ENCODE measurements at regions of chr9 and their contacts with region 1.

Region 1: DNA sequence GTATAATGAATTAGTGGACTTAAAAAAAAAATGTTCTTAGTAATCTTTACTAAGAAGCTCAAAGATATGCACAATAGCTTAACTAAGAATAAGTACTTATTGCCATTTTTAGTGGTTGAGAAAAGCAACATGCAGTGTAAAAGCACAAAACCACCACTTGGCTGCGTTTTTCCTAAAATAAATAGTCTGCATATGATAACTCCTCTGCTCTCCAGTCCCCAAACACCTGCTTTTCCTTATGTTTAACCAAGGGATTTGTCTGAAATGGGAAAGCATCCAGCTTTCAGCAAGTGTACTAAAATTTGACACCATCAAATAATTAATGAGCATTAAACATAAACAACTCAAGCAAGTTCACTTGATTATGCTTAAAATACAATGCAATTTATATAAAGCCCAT is 41.4 kb downstream of the PSIP1 start:
- DNase-seq: peak in 2 of 3 donors; percentile 11 to 13
- H3K4me3 ChIP-seq: no peak overlapping the region
- H3K27ac ChIP-seq: no peak overlapping the region
- H3K4me1 ChIP-seq: no peaks in the 10 kb centered on the region
- H3K27me3 ChIP-seq: no peaks in the 10 kb centered on the region

Region 2: GRCh38 chr9:15416880-15417279 is 52.5 kb before region 1 on chr9:
- CTCF ChIA-PET with region 1: no interaction called
- POLR2A ChIA-PET with region 1: no interaction called
- DNase-seq: peak; percentile 59 to 82 (median 76)
- H3K4me3 ChIP-seq: no peak overlapping the region
- H3K27ac ChIP-seq: no peak overlapping the region
- H3K4me1 ChIP-seq: peaks cover 0 to 3% (median under 1%) of the 10 kb centered on the region in 4 experiments
- H3K27me3 ChIP-seq: no peaks in the 10 kb centered on the region

Region 3: GRCh38 chr9:15484802-15485201 is 15.4 kb after region 1 on chr9:
- CTCF ChIA-PET with region 1: interaction called, 12 read pairs
- POLR2A ChIA-PET with region 1: no interaction called
- DNase-seq: no peak
- H3K4me3 ChIP-seq: no peak overlapping the region
- H3K27ac ChIP-seq: no peak overlapping the region
- H3K4me1 ChIP-seq: no peaks in the 10 kb centered on the region
- H3K27me3 ChIP-seq: no peaks in the 10 kb centered on the region